IMR-90 (cell line): ENCODE measurements at regions of chr6 and their contacts with region 1.

Region 1: DNA sequence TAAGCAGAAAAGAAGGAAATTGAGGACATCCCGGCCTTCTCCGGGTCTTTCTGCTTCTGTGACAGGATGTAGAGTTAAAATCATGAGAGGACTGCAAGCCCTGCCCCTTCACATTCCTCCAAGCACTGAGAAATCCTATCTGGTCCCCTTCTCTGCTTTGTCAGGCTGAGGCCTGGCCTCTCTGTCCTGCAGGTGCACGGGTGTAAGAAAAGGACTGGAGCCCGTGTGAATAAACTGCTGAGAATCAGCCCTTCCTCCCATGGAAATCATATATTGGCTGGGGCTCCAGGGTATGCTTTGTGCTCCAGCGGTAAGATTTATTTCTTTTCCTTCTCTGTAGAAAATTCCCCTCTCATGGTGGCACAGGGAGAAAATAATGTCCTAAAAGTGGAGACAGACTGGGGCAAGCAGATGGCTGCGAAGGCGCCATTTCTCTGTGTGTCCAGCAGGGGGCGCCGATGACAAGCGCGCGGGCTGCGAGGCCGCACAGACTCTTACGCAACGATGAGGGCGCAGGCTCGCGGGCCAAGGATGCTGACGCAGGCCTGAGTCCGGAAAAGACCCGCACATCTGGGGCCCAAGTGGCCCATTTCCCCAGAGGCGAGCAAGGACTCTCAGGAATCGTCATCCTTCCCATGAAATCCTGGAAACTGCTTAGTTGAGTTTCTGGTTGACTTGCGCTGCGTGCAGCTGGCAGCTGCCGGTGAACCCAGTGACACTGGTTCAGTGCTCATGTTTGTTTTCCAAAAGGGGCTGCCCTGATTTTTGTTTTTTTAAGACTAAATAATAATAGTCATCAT is 258.6 kb downstream of the ADGB start:
- DNase-seq: peak; percentile 93
- ATAC-seq: peak; percentile 96
- H3K4me3 ChIP-seq: peak overlapping the region; percentile 27; the same call in 1 of the 2 replicates
- H3K27ac ChIP-seq: peak overlapping the region; percentile 79
- H3K4me1 ChIP-seq: peaks cover 3% of the 10 kb centered on the region; the same call in 1 of the 2 replicates
- H3K27me3 ChIP-seq: no peaks in the 10 kb centered on the region
- CTCF ChIP-seq: peak; percentile 97
- POLR2A ChIP-seq: peak; percentile 33; the same call in 1 of the 2 replicates
- RAD21 ChIP-seq: peak; percentile 99

Region 2: DNA sequence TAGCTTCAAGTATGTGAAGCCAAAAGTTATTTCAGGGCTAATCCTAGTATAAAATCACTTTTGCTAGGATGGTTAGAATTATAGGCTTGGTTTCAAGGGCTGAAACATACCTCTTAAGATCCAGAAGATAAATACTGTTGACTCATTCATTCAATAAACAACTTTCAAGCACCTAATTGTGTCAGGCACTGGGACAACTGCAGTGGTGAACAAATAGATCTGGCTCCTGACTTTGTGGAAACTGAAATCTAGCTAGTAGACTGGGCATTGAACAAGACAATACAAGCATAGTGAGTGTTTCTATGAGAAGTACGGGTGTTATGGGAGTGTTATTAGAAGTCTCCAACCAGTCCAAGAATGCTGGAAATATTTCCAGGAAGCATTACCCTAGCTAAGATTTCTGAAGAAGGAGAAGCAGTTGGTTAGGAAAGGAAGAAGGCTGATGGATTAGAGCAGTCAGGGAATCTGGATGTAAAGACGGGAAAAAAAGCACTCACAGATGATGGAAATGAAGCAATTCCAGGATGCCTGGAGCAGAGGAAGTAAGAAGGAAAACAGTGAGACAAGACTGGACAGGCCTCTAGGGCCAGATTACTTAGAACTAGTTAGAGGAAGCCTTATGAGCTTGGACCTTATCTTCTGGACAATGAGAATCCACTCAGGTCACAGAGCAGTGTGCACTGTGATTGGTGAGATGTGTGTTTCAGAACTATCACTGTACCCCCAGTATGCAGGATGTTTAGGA is 446.4 kb before region 1 on chr6:
- CTCF ChIA-PET with region 1: no interaction called
- POLR2A ChIA-PET with region 1: no interaction called
- dilution Hi-C with region 1: no loop called
- in situ Hi-C with region 1: no loop called
- intact Hi-C with region 1: no loop called
- DNase-seq: no peak
- ATAC-seq: no peak
- H3K4me3 ChIP-seq: no peak overlapping the region
- H3K27ac ChIP-seq: no peak overlapping the region
- H3K4me1 ChIP-seq: no peaks in the 10 kb centered on the region
- H3K27me3 ChIP-seq: no peaks in the 10 kb centered on the region
- CTCF ChIP-seq: no peak
- POLR2A ChIP-seq: no peak
- RAD21 ChIP-seq: no peak

Region 3: DNA sequence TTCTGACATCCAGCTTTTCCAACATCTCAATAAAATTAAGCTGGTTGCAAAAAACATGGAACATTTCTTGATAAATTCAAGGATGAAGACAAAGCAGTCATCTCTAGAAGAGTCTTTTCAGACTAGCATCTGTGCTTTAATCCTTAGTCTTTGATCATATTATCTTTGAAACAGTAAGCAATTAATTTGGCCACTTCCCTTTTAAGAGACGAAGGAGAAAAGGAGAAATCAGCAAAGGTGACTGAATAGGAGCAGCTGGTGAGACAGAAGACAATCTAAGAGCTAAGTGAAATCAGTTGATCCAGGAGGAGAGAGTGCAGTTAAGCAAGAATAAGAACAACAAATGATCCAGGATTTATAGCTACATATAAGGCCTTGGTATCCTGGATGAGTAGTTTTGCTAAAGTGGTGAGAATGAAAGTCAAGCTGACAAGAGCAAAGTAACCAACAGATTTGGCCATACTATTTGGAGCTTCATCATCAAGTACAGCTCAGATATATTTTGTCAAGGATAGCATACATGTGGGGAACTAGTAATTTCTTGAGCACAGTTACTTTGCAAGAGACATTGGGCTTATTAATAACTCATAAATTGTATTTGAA is 43.1 kb before region 1 on chr6:
- CTCF ChIA-PET with region 1: no interaction called
- POLR2A ChIA-PET with region 1: no interaction called
- dilution Hi-C with region 1: no loop called
- in situ Hi-C with region 1: no loop called
- intact Hi-C with region 1: no loop called
- DNase-seq: peak; percentile 40
- ATAC-seq: no peak; the same call in 1 of the 2 replicates
- H3K4me3 ChIP-seq: no peak overlapping the region
- H3K27ac ChIP-seq: no peak overlapping the region
- H3K4me1 ChIP-seq: peaks cover 3% of the 10 kb centered on the region; the same call in 1 of the 2 replicates
- H3K27me3 ChIP-seq: no peaks in the 10 kb centered on the region
- CTCF ChIP-seq: no peak
- POLR2A ChIP-seq: no peak
- RAD21 ChIP-seq: no peak

Region 4: GRCh38 chr6:146913842-146914488 is 56.6 kb after region 1 on chr6:
- CTCF ChIA-PET with region 1: no interaction called
- POLR2A ChIA-PET with region 1: no interaction called
- dilution Hi-C with region 1: no loop called
- in situ Hi-C with region 1: no loop called
- intact Hi-C with region 1: loop called (anchors 1 kb)
- DNase-seq: peak; percentile 99
- ATAC-seq: peak; percentile 88
- H3K4me3 ChIP-seq: peak overlapping the region; percentile 28; the same call in 1 of the 2 replicates
- H3K27ac ChIP-seq: peak overlapping the region; percentile 97
- H3K4me1 ChIP-seq: peaks cover 16% of the 10 kb centered on the region
- H3K27me3 ChIP-seq: no peaks in the 10 kb centered on the region
- CTCF ChIP-seq: 0 out of 2 replicates have a peak, but pooled peaks have one; percentile 12
- POLR2A ChIP-seq: peak; percentile 81
- RAD21 ChIP-seq: peak; percentile 50

Region 5: DNA sequence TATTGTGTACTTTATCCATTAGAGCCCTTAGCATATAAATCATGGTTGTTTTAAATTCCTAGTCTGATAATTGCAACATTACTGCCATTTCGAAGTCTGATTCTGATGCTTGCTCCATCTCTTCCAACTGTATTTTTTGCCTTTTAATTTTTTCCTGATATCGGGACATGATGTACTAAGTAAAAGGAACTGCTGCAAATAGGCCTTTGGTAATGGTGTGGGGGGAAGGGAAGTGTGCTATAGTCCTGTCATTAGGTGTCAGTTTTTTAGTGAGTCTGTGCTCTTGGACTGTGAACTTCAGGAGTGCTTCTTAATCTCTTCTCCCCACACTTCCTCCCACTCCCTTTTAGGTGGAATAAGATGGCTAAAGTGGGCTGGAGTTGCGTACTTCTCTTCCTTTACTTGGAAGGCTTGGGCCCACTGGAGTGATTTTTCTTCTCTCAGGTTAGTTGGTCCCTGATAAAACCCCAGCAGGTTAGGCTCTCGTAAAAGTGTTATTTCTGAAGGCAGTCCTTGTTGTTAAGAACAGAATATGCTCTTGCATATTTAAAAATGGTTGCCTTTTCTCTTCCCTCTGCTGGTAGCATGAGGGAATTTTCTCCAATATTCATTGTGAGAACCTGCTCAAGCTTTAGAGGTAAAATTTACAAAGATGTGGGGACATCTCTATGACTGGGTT is 364.9 kb after region 1 on chr6:
- CTCF ChIA-PET with region 1: no interaction called
- POLR2A ChIA-PET with region 1: no interaction called
- dilution Hi-C with region 1: no loop called
- in situ Hi-C with region 1: no loop called
- intact Hi-C with region 1: loop called (anchors 5 kb)
- DNase-seq: peak; percentile 52
- ATAC-seq: peak; percentile 75
- H3K4me3 ChIP-seq: no peak overlapping the region
- H3K27ac ChIP-seq: peak overlapping the region; percentile 95; the same call in 1 of the 2 replicates
- H3K4me1 ChIP-seq: peaks cover 8% of the 10 kb centered on the region
- H3K27me3 ChIP-seq: no peaks in the 10 kb centered on the region
- CTCF ChIP-seq: peak; percentile 52
- POLR2A ChIP-seq: no peak
- RAD21 ChIP-seq: peak; percentile 55

Region 6: DNA sequence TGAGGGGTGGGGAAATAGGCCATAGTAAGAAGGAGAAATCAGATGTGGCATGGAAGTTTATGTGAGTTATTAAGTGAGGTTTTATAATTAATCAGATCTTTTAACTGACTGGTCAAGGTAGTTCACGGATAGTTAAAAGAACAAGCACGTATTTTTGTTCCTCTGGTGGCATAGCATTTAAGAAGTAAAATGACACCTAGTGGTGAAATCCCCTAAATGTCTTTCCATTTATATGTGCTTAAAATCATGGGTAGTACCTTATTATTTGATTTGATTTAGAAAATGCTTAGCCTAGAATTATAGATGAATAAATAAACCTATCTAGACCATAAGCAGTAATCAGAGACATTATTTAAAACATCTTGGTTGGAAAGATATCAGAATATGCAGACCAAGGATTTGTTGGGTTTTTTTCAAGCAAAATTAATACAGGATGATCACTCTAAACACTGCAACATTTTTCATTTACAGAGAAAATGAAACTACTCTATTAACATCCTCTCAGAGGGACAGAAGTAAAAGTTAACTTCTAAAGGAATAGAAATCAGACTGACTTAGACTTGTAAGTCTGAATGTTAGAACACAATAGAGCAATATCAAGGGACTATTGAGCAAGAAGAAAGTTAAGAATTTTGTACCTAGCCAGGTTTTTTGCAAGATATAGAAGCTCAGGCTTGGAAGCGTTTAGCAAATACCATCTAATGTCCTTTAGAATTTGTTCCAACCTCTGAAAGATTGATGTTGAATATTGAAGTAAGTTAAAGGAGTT is 427.9 kb after region 1 on chr6:
- CTCF ChIA-PET with region 1: interaction called, 6 read pairs
- POLR2A ChIA-PET with region 1: no interaction called
- dilution Hi-C with region 1: no loop called
- in situ Hi-C with region 1: loop called (anchors 10 kb)
- intact Hi-C with region 1: loop called (anchors 2 kb)
- DNase-seq: peak; percentile 65
- ATAC-seq: peak; percentile 67
- H3K4me3 ChIP-seq: no peak overlapping the region
- H3K27ac ChIP-seq: no peak overlapping the region
- H3K4me1 ChIP-seq: peaks cover 5% of the 10 kb centered on the region
- H3K27me3 ChIP-seq: no peaks in the 10 kb centered on the region
- CTCF ChIP-seq: peak; percentile 56
- POLR2A ChIP-seq: no peak
- RAD21 ChIP-seq: peak; percentile 60

Region 7: GRCh38 chr6:147382945-147383554 is 525.7 kb after region 1 on chr6:
- CTCF ChIA-PET with region 1: no interaction called
- POLR2A ChIA-PET with region 1: no interaction called
- dilution Hi-C with region 1: no loop called
- in situ Hi-C with region 1: no loop called
- intact Hi-C with region 1: loop called (anchors 10 kb)
- DNase-seq: peak; percentile 41
- ATAC-seq: peak; percentile 75
- H3K4me3 ChIP-seq: no peak overlapping the region
- H3K27ac ChIP-seq: no peak overlapping the region
- H3K4me1 ChIP-seq: peaks cover 2% of the 10 kb centered on the region; the same call in 1 of the 2 replicates
- H3K27me3 ChIP-seq: no peaks in the 10 kb centered on the region
- CTCF ChIP-seq: peak; percentile 53
- POLR2A ChIP-seq: no peak
- RAD21 ChIP-seq: no peak

Region 8: GRCh38 chr6:148166339-148166968 is 1309.1 kb after region 1 on chr6:
- CTCF ChIA-PET with region 1: no interaction called
- POLR2A ChIA-PET with region 1: no interaction called
- dilution Hi-C with region 1: no loop called
- in situ Hi-C with region 1: loop called (anchors 25 kb)
- intact Hi-C with region 1: no loop called
- DNase-seq: peak; percentile 72
- ATAC-seq: peak; percentile 75
- H3K4me3 ChIP-seq: no peak overlapping the region
- H3K27ac ChIP-seq: no peak overlapping the region
- H3K4me1 ChIP-seq: no peaks in the 10 kb centered on the region
- H3K27me3 ChIP-seq: no peaks in the 10 kb centered on the region; the same call in 1 of the 2 replicates
- CTCF ChIP-seq: peak; percentile 71
- POLR2A ChIP-seq: no peak
- RAD21 ChIP-seq: peak; percentile 72